ENCODE measurements at regions of chr16 and their contacts with region 1.

Region 1: GRCh38 chr16:14300705-14301168 is 229.6 kb downstream of the MRTFB start:
- DNase-seq: peak; percentile 92
- H3K4me3 ChIP-seq: peak overlapping the region; percentile 43 to 100 (median 97)
- H3K27ac ChIP-seq: peak overlapping the region; percentile 85 to 92 (median 90)
- H3K4me1 ChIP-seq: peaks cover 0 to 37% (median 19%) of the 10 kb centered on the region in 4 donors
- H3K27me3 ChIP-seq: no peaks in the 10 kb centered on the region
- CTCF ChIP-seq: peak; percentile 50 to 76 (median 56)
- EP300 ChIP-seq: no peak
- POLR2A ChIP-seq: no peak

Region 2: DNA sequence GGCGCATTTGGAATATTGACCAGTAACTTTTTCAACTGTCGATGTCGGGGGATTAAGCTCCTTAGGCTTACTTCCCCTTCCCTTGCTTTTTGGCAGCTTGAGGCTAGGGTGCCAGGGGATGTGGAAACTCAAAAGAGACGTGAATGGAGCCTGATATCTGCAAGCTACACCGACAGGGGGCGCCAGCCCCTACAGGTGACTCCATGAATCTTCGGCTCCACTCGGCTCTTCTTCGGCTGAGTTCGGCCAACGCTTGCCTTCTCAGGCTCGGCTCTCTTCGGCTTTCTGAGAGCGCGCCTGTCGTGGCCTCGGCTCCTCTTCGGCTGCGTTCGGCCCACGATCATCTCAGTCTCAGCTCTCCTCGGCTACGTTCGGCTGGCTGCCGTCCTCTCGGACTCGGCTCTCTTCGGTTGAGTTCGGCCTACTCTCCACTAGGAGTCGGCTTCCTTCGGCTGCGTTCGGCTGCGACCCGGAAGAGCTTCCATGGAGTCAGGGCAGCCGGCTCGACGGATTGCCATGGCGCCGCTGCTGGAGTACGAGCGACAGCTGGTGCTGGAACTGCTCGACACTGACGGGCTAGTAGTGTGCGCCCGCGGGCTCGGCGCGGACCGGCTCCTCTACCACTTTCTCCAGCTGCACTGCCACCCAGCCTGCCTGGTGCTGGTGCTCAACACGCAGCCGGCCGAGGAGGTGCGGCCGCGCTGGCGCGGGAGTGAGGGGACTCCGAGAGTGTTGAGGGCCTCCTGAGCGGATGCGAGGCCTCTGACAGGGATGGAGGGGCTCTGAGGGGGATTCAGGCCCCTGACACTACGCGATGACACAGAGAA is 380.8 kb before region 1 on chr16 and contains the start of gene ERCC4:
- intact Hi-C with region 1: loop called (anchors 5 kb)
- DNase-seq: peak; percentile 100
- H3K4me3 ChIP-seq: peak within 1 kb of the TSS; percentile 78 to 89 (median 88)
- H3K27ac ChIP-seq: peak within 1 kb of the TSS; percentile 77 to 85 (median 83)
- H3K4me1 ChIP-seq: peaks cover 0 to 30% (median 18%) of the 10 kb centered on the region in 4 donors
- H3K27me3 ChIP-seq: no peaks in the 10 kb centered on the region
- CTCF ChIP-seq: peak; percentile 83 to 92 (median 89)
- EP300 ChIP-seq: no peak
- POLR2A ChIP-seq: no peak
- total RNA-seq, gene ERCC4: 7.7 to 11.4 (median 10.6) TPM

Region 3: GRCh38 chr16:14024300-14024699 is 276.4 kb before region 1 on chr16:
- intact Hi-C with region 1: no loop called
- DNase-seq: no peak
- H3K4me3 ChIP-seq: no peak overlapping the region
- H3K27ac ChIP-seq: no peak overlapping the region
- H3K4me1 ChIP-seq: no peaks in the 10 kb centered on the region
- H3K27me3 ChIP-seq: no peaks in the 10 kb centered on the region
- CTCF ChIP-seq: no peak
- EP300 ChIP-seq: no peak
- POLR2A ChIP-seq: no peak

Region 4: GRCh38 chr16:14172200-14172782 is 128.4 kb before region 1 on chr16:
- intact Hi-C with region 1: no loop called
- DNase-seq: no peak
- H3K4me3 ChIP-seq: no peak overlapping the region
- H3K27ac ChIP-seq: no peak overlapping the region
- H3K4me1 ChIP-seq: no peaks in the 10 kb centered on the region
- H3K27me3 ChIP-seq: no peaks in the 10 kb centered on the region
- CTCF ChIP-seq: no peak
- EP300 ChIP-seq: no peak
- POLR2A ChIP-seq: no peak

Region 5: DNA sequence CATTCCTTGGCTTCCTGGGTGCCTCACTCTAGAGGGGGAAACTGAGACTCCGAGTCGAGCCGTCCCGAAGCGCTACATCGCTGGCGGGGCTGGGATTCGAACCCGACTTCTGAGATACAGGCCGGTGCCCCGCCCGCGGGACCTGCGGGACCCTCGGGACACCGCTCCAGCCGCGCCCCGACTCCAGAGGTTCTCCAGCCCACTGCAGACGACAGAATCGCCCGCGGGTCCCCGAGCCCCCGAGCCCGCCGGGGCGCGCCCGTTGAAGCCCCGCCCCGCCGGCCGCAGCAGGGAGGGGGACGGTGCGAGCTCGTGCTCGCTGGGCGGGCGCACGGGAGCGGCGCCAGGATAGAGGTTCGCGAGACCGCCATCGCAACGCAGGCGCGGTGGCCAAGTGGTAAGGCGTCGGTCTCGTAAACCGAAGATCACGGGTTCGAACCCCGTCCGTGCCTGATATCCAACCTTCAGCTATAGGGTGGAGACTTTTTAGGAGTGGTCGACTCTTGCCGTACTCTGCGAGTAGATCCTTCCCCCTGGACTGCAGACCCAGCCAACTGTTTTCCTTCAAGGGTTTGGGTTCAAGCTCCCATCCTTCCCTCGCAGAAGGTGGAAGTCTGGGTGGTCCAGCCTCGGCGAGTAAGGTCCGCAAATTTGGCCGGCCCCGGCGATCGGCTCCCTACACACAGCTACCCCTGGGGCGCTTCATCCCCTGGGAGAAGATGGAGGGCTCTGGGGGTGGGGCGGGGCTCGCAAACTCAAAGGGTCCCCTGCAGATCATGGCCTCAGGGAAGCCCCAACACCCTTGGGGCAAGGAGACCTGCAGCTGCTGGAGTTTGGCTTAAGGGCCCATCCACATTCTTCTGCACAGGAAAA is 15.0 kb before region 1 on chr16:
- intact Hi-C with region 1: loop called (anchors 2 kb)
- DNase-seq: peak; percentile 96
- H3K4me3 ChIP-seq: peak overlapping the region; percentile 66 to 83 (median 82)
- H3K27ac ChIP-seq: peak overlapping the region; percentile 83 to 93 (median 88)
- H3K4me1 ChIP-seq: peaks cover 4 to 19% (median 13%) of the 10 kb centered on the region in 4 donors
- H3K27me3 ChIP-seq: no peaks in the 10 kb centered on the region
- CTCF ChIP-seq: no peak
- EP300 ChIP-seq: no peak
- POLR2A ChIP-seq: no peak

Region 6: GRCh38 chr16:14418795-14419225 is 118.1 kb after region 1 on chr16:
- intact Hi-C with region 1: loop called (anchors 2 kb)
- DNase-seq: peak; percentile 85
- H3K4me3 ChIP-seq: no peak overlapping the region
- H3K27ac ChIP-seq: peak overlapping the region in 3 of 4 donors; percentile 78 to 82 (median 80)
- H3K4me1 ChIP-seq: peaks cover 0 to 25% (median 23%) of the 10 kb centered on the region in 4 donors
- H3K27me3 ChIP-seq: no peaks in the 10 kb centered on the region
- CTCF ChIP-seq: no peak
- EP300 ChIP-seq: peak; percentile 44 to 91 (median 85)
- POLR2A ChIP-seq: no peak

Region 7: DNA sequence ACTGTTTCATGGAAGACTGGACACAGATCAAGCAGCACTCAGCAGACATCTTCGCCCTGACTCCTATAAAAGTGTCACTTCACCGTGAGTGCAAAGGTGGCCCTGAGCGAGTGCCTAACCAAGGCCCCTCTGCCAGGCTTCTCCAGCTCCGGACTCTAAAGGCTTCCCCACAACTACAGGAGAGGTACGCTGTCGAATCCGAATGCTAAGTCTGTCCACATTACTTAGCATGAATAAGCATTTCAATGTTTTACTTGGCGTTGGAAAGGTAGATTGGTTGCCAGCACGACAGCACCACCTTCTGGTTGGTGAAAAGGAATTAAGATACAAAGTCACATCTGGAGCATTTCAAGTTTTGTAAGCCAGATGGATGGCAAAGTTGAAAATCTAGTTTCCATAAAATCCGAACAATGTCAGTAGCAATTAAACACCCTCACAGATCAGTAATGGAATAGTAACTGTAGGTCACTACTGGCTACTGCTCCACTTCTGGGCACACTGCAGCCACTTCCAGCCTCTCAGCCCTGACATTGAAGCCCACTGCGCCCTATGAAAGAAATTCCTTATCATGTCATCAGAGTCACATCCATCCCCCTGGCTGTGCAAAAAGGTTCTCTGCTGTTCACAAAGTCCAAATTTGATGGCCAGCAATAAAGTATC is 228.4 kb after region 1 on chr16:
- intact Hi-C with region 1: loop called (anchors 1 kb)
- DNase-seq: peak; percentile 91
- H3K4me3 ChIP-seq: peak overlapping the region in 3 of 4 donors; percentile 28 to 38 (median 29)
- H3K27ac ChIP-seq: peak overlapping the region; percentile 48 to 56 (median 50)
- H3K4me1 ChIP-seq: peaks cover 0 to 33% (median 23%) of the 10 kb centered on the region in 4 donors
- H3K27me3 ChIP-seq: no peaks in the 10 kb centered on the region
- CTCF ChIP-seq: peak; percentile 68 to 88 (median 78)
- EP300 ChIP-seq: no peak
- POLR2A ChIP-seq: no peak

Measured in sigmoid colon (tissue), 7 donors.